ENCODE measurements at regions of chr3 and their contacts with region 1.

Region 1: GRCh38 chr3:123028233-123028828 is 768 bp upstream of the SEMA5B start:
- DNase-seq: peak; percentile 22
- H3K4me3 Mint-ChIP-seq: peak overlapping the region; percentile 69
- H3K27ac Mint-ChIP-seq: no peak overlapping the region
- H3K4me1 Mint-ChIP-seq: peaks cover 9% of the 10 kb centered on the region
- H3K27me3 Mint-ChIP-seq: peaks cover 39% of the 10 kb centered on the region
- CTCF ChIP-seq: peak; percentile 16

Region 2: DNA sequence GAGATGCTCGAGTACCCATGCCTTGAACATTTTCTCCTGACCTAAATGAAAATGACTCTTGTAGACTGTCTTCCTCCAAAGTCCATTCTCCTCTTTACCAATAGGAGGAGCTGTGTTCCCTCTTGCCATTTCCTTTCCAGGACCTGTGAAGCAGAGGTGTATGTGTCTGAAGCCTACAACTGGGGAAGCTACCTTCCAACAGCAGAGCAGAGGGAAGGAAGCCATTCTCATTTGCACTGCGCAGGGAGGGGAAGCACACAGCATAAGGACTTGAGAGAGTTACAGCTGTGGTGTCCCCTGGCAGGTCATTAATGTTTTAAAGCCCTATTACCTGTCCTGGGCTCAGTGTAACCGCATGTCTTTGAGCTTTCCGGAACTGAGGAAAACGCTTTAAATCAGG is 273.4 kb before region 1 on chr3:
- CTCF ChIA-PET with region 1: interaction called, 7 read pairs
- intact Hi-C with region 1: loop called (anchors 1 kb)
- DNase-seq: peak; percentile 32
- H3K4me3 Mint-ChIP-seq: no peak overlapping the region
- H3K27ac Mint-ChIP-seq: no peak overlapping the region
- H3K4me1 Mint-ChIP-seq: no peaks in the 10 kb centered on the region
- H3K27me3 Mint-ChIP-seq: no peaks in the 10 kb centered on the region
- CTCF ChIP-seq: peak; percentile 59

Region 3: DNA sequence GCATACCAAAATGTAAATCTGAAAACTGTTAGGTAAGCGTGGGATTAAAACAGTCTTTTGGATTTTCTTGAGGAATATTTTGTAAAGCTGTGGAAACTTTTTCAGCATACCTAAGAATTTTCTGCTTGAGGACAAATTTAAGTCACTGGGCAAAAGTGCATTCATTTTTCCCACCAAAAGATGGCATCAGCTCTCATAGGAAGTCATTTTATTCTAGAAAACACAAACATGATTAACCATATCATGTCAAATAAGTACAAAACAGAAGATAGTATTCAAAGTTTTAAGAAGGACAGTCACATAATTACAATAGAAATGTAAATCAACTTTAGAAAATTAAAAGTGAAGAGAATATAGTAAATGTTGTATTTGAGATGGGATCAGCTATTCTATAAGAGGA is 170.0 kb before region 1 on chr3:
- CTCF ChIA-PET with region 1: interaction called, 9 read pairs
- intact Hi-C with region 1: loop called (anchors 5 kb)
- DNase-seq: no peak
- H3K4me3 Mint-ChIP-seq: no peak overlapping the region
- H3K27ac Mint-ChIP-seq: no peak overlapping the region
- H3K4me1 Mint-ChIP-seq: peaks cover 21% of the 10 kb centered on the region
- H3K27me3 Mint-ChIP-seq: no peaks in the 10 kb centered on the region
- CTCF ChIP-seq: no peak

Region 4: DNA sequence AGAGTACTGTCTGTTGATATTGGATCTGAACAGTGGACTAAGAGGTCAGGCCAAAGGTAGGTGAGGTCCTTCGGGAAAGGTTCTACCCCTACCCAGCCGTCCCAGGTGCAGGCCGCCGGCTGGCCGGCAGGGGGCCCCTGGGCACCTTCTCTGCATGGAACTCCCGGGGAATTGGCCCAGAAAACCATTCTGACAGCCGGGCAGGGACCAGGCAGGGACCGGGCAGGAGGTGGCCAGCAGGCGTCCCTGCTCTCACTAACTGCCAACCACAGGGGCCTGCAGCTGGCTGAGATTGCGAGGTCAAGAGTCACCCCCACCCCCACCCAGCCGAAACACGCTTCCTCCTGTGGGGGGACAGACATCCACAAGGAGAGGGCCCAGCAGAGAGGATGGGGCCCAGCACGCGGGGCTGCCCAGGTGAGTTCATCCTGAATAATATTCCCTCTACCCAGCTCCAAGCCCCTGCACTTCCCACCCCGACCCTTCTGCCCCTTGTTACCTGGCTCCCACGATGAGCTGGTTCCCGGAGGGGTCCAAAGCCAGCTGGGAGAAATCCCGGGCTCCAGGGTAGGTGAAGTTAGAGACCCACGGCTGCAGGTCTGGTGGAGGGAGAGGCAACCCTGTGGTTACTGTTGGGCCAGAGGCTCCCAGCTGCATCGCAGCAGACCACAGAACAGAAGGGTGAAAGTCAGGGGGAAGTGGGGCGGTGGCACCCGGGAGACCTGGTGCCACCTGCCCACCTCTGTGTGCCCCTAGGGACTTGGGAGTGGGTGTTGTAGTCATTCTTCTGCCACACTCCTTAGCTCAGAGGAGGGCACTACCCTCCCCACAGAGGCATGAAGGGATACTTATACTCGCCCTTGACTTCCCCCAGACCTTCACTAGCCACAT is 85.1 kb before region 1 on chr3:
- CTCF ChIA-PET with region 1: interaction called, 5 read pairs
- intact Hi-C with region 1: loop called (anchors 1 kb)
- DNase-seq: peak; percentile 88
- H3K4me3 Mint-ChIP-seq: no peak overlapping the region
- H3K27ac Mint-ChIP-seq: no peak overlapping the region
- H3K4me1 Mint-ChIP-seq: no peaks in the 10 kb centered on the region
- H3K27me3 Mint-ChIP-seq: peaks cover 14% of the 10 kb centered on the region
- CTCF ChIP-seq: peak; percentile 91

Region 5: GRCh38 chr3:122982216-122983185 is 45.8 kb before region 1 on chr3:
- CTCF ChIA-PET with region 1: no interaction called
- intact Hi-C with region 1: no loop called
- DNase-seq: no peak
- H3K4me3 Mint-ChIP-seq: no peak overlapping the region
- H3K27ac Mint-ChIP-seq: no peak overlapping the region
- H3K4me1 Mint-ChIP-seq: peaks cover 9% of the 10 kb centered on the region
- H3K27me3 Mint-ChIP-seq: peaks cover 74% of the 10 kb centered on the region
- CTCF ChIP-seq: no peak